ENCODE measurements at regions of chr16 and their contacts with region 1.

Region 1: DNA sequence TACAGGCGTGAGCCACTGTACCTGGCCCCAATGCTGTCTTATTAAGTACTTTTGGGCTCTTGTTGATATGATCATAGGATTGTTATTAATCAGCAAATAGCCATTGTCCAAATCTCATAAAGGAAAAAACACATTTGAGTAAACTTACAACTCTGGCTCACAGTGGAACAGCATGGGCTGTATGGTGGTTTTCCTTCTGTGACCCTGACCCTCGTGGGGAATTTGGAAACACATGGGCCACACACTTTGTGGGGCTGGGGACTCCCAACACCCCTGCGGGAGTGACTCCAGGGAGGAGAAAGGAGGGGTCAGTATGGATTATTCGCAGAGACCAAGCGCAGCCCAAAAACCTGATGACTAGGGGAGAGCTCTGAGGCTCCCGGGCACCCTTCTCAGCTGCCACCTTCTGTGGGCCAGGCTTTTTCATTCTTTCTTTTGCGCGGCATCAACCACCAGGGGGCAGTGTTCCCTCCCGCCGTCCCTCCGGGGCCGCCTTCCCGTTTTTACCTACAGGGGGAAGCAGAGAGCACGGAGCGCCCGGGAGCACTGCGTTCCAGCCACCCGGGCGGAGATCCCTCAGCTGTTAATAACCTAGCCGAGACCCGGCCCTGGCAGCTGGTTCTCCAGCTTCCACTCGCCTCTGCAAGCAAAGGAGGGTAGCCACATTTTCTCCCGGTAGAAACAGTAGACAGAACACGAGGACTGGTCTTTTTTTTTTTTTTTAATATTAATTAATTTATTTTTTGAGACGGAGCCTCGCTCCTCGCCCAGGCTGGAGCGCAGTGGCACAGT is 9.7 kb downstream of the TSNAXIP1 start:
- DNase-seq: peak; percentile 76 to 98 (median 87)
- ATAC-seq: peak; percentile 100
- H3K4me3 ChIP-seq: no peak overlapping the region
- H3K4me3 Mint-ChIP-seq: peak overlapping the region in 7 of 10 donors; percentile 30 to 62 (median 49)
- H3K27ac ChIP-seq: no peak overlapping the region
- H3K27ac Mint-ChIP-seq: peak overlapping the region in 4 of 9 donors; percentile 13 to 77 (median 46)
- H3K4me1 ChIP-seq: no peaks in the 10 kb centered on the region
- H3K4me1 Mint-ChIP-seq: peaks cover 0 to 8% (median 6%) of the 10 kb centered on the region in 7 donors
- H3K27me3 ChIP-seq: no peaks in the 10 kb centered on the region
- H3K27me3 Mint-ChIP-seq: peaks cover 0 to 6% (median 0%) of the 10 kb centered on the region in 5 donors

Region 2: DNA sequence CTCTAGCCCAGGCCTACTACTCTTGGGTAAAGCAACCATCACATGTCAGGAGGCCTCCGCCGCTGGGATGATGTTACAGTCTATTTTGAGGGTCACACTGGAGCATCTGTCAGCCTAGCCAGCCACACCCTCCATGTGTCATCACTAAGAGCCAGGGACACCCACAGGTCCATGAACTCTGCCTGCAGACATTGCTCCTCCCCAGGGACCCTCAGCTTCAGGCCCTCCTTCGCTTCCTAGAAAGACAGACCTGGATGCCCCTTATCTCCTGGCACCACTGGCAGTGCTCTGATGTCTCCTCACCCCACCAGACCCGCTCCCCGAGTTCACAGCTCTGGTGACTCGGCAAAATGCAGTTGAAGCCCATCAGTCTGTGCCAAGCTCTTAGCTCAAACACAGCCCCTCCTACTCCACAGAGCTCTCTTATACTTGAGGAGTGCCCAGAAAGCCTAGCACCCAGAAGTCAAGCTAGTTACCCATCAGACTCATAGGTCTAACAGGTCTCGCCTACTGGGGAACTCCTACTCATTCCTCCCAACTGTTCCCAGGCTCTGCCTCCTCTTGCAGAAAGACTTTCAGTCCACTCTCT is 16.0 kb before region 1 on chr16:
- CTCF ChIA-PET with region 1: interaction called, 29 read pairs
- POLR2A ChIA-PET with region 1: interaction called, 4 read pairs
- intact Hi-C with region 1: no loop called
- DNase-seq: no peak
- ATAC-seq: peak; percentile 36
- H3K4me3 ChIP-seq: no peak overlapping the region
- H3K4me3 Mint-ChIP-seq: peak overlapping the region in 3 of 10 donors; percentile 5 to 76 (median 56)
- H3K27ac ChIP-seq: no peak overlapping the region
- H3K27ac Mint-ChIP-seq: peak overlapping the region in 8 of 9 donors; percentile 28 to 78 (median 62)
- H3K4me1 ChIP-seq: peaks cover 28 to 37% of the 10 kb centered on the region in 2 donors
- H3K4me1 Mint-ChIP-seq: peaks cover 45 to 81% (median 73%) of the 10 kb centered on the region in 7 donors
- H3K27me3 ChIP-seq: no peaks in the 10 kb centered on the region
- H3K27me3 Mint-ChIP-seq: no peaks in the 10 kb centered on the region

Region 3: DNA sequence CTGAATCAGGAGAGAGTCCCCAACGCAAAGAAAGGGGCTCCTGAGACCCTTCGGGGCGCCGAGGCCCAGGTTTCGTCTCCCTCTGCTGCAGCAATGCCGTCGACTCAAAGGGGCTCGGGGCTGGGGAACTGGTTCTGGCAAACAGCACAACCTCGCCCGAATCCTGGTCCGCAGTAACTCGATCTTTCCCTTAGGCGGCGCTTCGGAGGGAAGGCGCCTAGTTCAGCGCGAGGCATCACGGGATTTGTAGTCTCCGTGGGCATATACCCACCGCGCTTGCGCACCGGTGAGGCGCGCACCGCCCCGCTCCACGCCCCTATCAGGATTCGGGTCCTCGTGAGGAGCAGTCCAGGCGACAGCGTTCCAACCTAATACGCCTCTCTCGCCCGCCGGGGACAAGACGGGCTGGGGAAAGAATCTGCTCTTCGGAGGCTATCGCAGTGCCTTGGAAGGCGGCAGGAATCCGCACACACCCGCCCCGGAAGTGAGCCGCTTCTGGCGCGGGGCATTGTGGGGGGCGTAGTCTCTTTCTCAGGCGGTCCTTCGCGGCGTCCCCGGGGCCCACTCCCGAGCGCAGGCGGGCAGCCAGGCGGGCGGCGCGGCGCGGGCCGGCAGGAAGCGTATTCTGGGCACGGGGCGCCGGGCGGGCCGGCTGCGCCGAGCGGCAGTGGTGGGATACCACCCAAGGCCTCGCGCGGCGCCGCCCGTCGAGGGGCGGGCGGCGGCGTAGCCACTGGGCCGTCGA is 25.5 kb after region 1 on chr16 and contains the start of gene THAP11:
- CTCF ChIA-PET with region 1: interaction called, 10 read pairs
- POLR2A ChIA-PET with region 1: interaction called, 5 read pairs
- intact Hi-C with region 1: loop called (anchors 1 kb)
- DNase-seq: peak; percentile 91 to 99 (median 96)
- ATAC-seq: peak; percentile 76
- H3K4me3 ChIP-seq: peak within 1 kb of the TSS; percentile 100
- H3K4me3 Mint-ChIP-seq: peak within 1 kb of the TSS; percentile 94 to 97 (median 96)
- H3K27ac ChIP-seq: peak within 1 kb of the TSS; percentile 99
- H3K27ac Mint-ChIP-seq: peak within 1 kb of the TSS; percentile 94 to 98 (median 97)
- H3K4me1 ChIP-seq: peaks cover 34 to 36% of the 10 kb centered on the region in 2 donors
- H3K4me1 Mint-ChIP-seq: peaks cover 18 to 41% (median 36%) of the 10 kb centered on the region in 7 donors
- H3K27me3 ChIP-seq: no peaks in the 10 kb centered on the region
- H3K27me3 Mint-ChIP-seq: no peaks in the 10 kb centered on the region
- total RNA-seq, gene THAP11: 29.0 to 62.7 (median 44.6) TPM

Region 4: GRCh38 chr16:67872786-67873537 is 56.5 kb after region 1 on chr16 and contains the start of gene EDC4:
- CTCF ChIA-PET with region 1: interaction called, 5 read pairs
- POLR2A ChIA-PET with region 1: no interaction called
- intact Hi-C with region 1: loop called in 1 of 2 experiments (anchors 1 kb)
- DNase-seq: peak; percentile 75 to 96 (median 83)
- ATAC-seq: peak; percentile 96
- H3K4me3 ChIP-seq: peak within 1 kb of the TSS; percentile 88
- H3K4me3 Mint-ChIP-seq: peak within 1 kb of the TSS; percentile 88 to 96 (median 94)
- H3K27ac ChIP-seq: peak within 1 kb of the TSS; percentile 91
- H3K27ac Mint-ChIP-seq: peak within 1 kb of the TSS; percentile 90 to 97 (median 92)
- H3K4me1 ChIP-seq: peaks cover 19 to 30% of the 10 kb centered on the region in 2 donors
- H3K4me1 Mint-ChIP-seq: peaks cover 25 to 41% (median 36%) of the 10 kb centered on the region in 7 donors
- H3K27me3 ChIP-seq: no peaks in the 10 kb centered on the region
- H3K27me3 Mint-ChIP-seq: no peaks in the 10 kb centered on the region
- total RNA-seq, gene EDC4: 103 to 166 (median 122) TPM

Region 5: DNA sequence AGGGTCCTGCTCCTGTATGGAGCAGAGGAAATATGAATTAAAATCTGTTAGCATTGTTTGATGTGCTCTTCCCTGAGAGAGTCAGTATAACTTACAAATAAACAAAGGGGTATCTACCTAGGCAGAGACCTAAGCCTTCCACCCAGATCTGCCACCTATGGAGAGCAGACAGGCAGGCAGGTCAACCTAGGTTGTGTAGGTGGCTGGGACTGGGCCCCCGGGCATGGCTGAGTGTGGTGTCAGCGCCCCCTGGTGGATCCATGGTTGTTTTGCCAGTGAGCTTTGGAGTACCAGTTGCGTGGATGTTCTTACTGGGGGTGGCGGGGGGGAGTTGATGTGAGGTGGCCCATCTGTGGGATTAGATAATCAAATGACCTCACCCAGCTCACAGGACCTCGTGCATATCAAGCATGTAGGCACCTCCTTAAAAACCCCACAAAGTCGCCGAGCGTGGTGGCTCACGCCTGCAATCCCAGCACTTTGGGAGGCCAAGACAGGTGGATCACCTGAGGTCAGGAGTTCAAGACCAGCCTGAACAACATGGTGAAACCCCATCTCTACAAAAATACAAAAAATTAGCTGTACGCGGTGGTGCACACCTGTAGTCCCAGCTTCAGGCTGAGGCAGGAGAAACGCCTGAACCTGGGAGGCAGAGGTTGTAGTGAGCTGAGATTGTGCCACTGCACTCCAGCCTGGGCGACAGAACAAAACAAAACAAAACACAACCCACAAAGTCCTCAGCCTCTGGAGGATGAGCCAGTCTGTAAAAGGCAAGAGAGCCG is 224.3 kb after region 1 on chr16:
- CTCF ChIA-PET with region 1: interaction called, 4 read pairs
- POLR2A ChIA-PET with region 1: no interaction called
- intact Hi-C with region 1: loop called (anchors 1 kb)
- DNase-seq: peak; percentile 81 to 95 (median 87)
- ATAC-seq: peak; percentile 100
- H3K4me3 ChIP-seq: no peak overlapping the region
- H3K4me3 Mint-ChIP-seq: peak overlapping the region in 1 of 10 donors; percentile 9
- H3K27ac ChIP-seq: peak overlapping the region; percentile 26
- H3K27ac Mint-ChIP-seq: peak overlapping the region; percentile 28 to 87 (median 61)
- H3K4me1 ChIP-seq: peaks cover 4 to 5% of the 10 kb centered on the region in 2 donors
- H3K4me1 Mint-ChIP-seq: peaks cover 5 to 26% (median 18%) of the 10 kb centered on the region in 7 donors
- H3K27me3 ChIP-seq: no peaks in the 10 kb centered on the region
- H3K27me3 Mint-ChIP-seq: no peaks in the 10 kb centered on the region

Region 6: GRCh38 chr16:68229431-68230198 is 413.2 kb after region 1 on chr16:
- CTCF ChIA-PET with region 1: no interaction called
- POLR2A ChIA-PET with region 1: no interaction called
- intact Hi-C with region 1: loop called in 1 of 2 experiments (anchors 1 kb)
- DNase-seq: peak in 6 of 9 donors; percentile 44 to 64 (median 58)
- ATAC-seq: peak; percentile 61
- H3K4me3 ChIP-seq: no peak overlapping the region
- H3K4me3 Mint-ChIP-seq: peak overlapping the region in 1 of 10 donors; percentile 29
- H3K27ac ChIP-seq: no peak overlapping the region
- H3K27ac Mint-ChIP-seq: peak overlapping the region; percentile 63 to 90 (median 77)
- H3K4me1 ChIP-seq: peaks cover 0 to 21% of the 10 kb centered on the region in 2 donors
- H3K4me1 Mint-ChIP-seq: peaks cover 18 to 53% (median 47%) of the 10 kb centered on the region in 7 donors
- H3K27me3 ChIP-seq: no peaks in the 10 kb centered on the region
- H3K27me3 Mint-ChIP-seq: no peaks in the 10 kb centered on the region

Measured in naive thymus-derived CD4-positive, alpha-beta T cell (primary cell).